ENCODE measurements at regions of chr11 and their contacts with region 1.

Region 1: DNA sequence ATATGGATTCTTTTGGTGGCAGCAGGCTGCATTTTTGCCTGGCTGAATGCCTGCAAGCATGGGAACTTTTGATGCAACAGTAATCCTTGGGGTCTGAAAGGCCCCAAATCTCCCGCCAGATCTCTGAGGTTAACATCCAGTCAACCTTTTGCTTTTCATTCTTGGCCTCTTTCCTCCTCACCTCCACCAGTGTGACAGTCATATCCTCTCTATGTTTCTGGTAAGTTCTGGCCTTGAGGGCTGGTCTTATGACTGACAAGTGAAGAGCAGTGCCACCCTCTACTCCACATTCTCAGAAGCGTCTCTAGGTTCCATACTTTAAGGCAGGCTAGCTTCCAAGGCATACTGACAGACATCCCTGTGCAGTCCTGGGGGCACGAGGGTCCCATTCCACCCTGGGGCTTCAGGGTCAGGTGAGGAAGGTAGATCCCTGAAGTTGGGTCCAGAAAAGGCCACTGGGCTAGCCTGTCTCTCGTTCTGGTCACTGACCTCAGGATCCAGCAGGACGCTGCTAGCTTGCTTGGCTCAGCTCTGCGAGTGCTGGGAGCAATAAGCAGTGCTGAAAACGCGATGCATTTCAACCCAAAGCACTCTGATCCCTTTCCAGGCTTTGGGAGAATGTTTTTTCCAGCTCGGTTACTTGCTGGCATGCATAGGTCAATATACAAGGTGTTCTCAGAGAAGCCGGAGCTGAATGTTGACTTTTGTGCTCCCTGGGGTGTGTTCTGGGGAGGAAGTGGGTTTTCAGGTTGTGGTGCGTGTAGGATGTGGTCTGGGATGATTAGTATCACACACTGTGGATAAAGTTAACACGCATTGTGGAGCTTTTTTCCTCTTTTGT is 75.2 kb downstream of the PTPRJ start:
- DNase-seq: peak; percentile 83
- H3K4me3 Mint-ChIP-seq: peak overlapping the region; percentile 23
- H3K27ac Mint-ChIP-seq: peak overlapping the region; percentile 91
- H3K4me1 Mint-ChIP-seq: peaks cover 80% of the 10 kb centered on the region
- H3K27me3 Mint-ChIP-seq: no peaks in the 10 kb centered on the region

Region 2: GRCh38 chr11:47932544-47932943 is 123.0 kb before region 1 on chr11:
- intact Hi-C with region 1: loop called (anchors 5 kb)
- DNase-seq: no peak
- H3K4me3 Mint-ChIP-seq: no peak overlapping the region
- H3K27ac Mint-ChIP-seq: no peak overlapping the region
- H3K4me1 Mint-ChIP-seq: peaks cover 20% of the 10 kb centered on the region
- H3K27me3 Mint-ChIP-seq: no peaks in the 10 kb centered on the region

Region 3: DNA sequence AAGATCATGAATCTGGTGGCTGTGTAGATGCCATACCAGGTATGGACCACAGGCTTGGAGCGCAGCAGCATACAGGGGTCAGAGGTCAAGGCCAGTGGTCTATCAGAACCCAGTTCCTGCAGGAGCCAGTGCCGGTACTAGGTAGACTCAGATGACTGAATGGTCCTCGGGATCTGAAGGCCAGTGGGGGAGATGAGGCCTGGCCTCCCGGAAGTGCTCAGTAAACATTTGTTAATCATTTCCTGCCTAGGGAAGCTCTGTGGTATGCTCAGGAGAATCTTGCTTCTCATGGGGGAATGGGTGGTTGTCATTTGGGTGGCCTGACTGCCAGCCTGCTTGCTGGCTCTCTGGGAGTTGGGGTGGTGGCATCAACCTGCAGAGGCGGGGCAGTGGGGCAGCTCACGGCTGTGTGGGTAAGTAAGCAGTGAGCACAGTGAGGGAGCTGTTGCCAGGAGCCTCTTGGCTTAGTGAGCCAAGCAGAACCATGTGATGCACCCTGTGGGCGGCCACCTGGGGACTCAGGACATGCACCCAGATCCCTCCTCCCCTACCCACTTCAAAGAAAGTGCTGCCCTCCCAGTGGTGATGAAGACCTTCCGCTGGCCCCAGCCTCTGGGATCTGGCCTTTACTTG is 42.1 kb before region 1 on chr11:
- intact Hi-C with region 1: loop called (anchors 2 kb)
- DNase-seq: no peak
- H3K4me3 Mint-ChIP-seq: peak overlapping the region; percentile 61
- H3K27ac Mint-ChIP-seq: peak overlapping the region; percentile 97
- H3K4me1 Mint-ChIP-seq: peaks cover 82% of the 10 kb centered on the region
- H3K27me3 Mint-ChIP-seq: no peaks in the 10 kb centered on the region

Region 4: DNA sequence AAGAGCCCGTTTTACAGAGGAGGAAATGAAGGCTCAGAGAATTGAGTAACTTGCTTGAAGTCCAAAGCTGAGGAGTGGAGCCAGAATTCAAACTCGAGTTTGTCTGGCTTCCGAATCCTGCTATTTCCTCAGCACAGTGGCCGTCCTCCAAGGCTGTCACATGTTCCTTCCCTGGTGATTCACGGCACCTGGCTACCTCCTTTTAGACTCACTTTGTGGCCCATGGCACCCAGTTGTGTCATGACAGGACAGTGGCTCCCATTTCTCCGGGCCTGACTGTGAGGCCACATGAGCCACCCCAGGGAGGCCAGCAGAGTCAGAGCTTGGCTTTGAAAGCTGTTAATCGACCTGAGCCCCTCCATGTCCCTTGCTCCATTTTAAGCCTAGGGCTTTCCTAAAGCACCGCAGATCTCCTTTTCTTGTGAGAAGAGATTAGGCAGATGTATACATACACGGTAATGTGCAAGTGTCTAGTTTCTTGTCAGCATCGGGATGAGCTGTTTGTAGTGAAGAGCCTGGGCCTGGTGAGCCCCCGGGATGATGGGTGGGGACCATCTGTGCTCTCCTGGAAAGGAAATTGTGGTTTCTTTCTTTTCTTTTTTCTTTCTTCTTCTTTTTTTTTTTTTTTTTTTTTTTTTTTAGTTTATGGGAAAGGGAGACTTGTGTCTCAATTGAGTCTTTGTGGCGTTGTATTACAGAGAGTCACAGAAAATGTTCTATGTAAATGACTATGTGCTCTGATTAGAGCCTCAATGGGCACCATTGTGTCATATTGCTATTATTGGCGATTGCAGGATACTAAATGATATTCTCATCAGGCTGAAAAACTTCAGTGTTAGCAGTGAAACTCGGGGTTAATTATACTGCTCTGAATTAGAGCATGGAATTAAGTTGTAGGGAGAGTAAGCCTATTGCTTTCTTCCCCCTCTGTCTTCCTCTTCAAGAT is 20.3 kb before region 1 on chr11:
- intact Hi-C with region 1: no loop called
- DNase-seq: no peak
- H3K4me3 Mint-ChIP-seq: peak overlapping the region; percentile 3
- H3K27ac Mint-ChIP-seq: peak overlapping the region; percentile 34
- H3K4me1 Mint-ChIP-seq: peaks cover 63% of the 10 kb centered on the region
- H3K27me3 Mint-ChIP-seq: no peaks in the 10 kb centered on the region

Region 5: DNA sequence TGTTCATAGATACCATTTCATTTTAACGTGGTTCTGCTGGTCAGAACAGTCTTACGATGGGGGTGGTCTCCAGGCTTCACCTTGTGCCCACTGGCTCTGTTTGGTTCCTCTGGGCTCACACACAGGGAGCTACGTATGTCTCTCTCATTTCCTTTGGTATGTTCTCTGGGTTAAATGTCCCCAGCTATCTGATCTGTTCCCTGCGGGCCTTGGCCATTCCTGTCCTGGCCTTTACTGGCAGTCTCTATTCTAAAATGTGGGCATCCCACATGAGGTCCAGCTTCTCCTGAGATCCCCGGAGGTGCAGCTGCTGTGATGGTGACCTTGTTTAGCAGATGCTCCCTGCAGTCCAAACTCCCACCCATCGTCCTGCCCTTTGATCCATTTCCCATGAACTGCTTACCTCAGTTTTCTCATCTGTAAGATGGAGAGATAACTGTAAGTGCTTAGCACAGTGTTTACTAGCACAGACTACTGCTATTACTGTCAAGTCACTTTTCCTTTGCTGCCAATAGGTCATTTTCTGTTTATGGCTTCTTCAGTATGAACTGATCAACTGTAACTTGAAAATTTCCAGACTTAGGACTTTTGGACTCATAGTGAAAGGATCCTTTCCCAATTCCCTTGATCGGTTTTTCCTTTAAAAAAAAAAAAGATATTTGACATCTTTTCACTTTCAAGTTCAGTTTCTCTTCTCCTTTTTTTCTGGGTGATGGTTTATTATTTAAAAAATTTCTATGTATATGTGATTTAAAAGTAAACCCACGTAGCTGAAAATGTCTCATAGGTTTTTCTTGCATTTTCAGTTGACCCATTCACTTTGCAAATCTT is 17.7 kb after region 1 on chr11:
- intact Hi-C with region 1: loop called (anchors 1 kb)
- DNase-seq: no peak
- H3K4me3 Mint-ChIP-seq: peak overlapping the region; percentile 49
- H3K27ac Mint-ChIP-seq: peak overlapping the region; percentile 79
- H3K4me1 Mint-ChIP-seq: peaks cover 36% of the 10 kb centered on the region
- H3K27me3 Mint-ChIP-seq: no peaks in the 10 kb centered on the region

Region 6: GRCh38 chr11:48097041-48097476 is 41.5 kb after region 1 on chr11:
- intact Hi-C with region 1: loop called (anchors 2 kb)
- DNase-seq: no peak
- H3K4me3 Mint-ChIP-seq: peak overlapping the region; percentile 4
- H3K27ac Mint-ChIP-seq: peak overlapping the region; percentile 74
- H3K4me1 Mint-ChIP-seq: peaks cover 61% of the 10 kb centered on the region
- H3K27me3 Mint-ChIP-seq: no peaks in the 10 kb centered on the region

Region 7: GRCh38 chr11:48154151-48154550 is 98.6 kb after region 1 on chr11:
- intact Hi-C with region 1: no loop called
- DNase-seq: no peak
- H3K4me3 Mint-ChIP-seq: no peak overlapping the region
- H3K27ac Mint-ChIP-seq: no peak overlapping the region
- H3K4me1 Mint-ChIP-seq: no peaks in the 10 kb centered on the region
- H3K27me3 Mint-ChIP-seq: no peaks in the 10 kb centered on the region

Region 8: DNA sequence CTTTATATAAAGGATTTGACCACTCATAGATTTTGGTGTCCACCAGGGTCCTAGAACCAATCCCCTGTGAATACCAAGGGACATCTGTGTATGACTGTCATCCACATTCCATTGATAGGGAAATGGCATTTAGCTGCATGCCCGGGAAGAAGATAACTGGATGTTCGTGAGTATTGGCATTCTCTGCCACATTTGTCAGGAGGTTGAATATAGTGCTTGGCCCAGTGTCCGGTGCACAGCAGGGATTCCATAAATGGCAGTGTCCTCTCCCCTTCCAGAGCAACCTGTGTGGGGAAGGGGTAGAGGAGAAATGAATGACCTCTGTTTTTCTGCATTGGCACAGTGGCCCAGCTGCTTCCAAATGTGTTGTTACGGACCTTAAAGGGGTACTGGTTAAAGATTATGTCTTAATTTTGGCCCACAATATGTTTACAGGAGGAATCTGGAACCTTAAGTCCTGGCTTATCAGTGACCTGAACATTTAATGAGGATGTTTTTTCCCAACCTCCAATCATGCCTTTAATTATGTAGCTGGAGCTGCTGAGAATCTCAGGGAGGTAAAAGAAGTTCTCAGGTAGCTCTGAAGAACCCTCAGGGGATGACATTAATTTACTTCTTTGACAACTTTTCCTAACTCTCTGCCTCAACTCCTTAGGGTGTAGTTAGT is 127.5 kb after region 1 on chr11:
- intact Hi-C with region 1: no loop called
- DNase-seq: no peak
- H3K4me3 Mint-ChIP-seq: no peak overlapping the region
- H3K27ac Mint-ChIP-seq: no peak overlapping the region
- H3K4me1 Mint-ChIP-seq: no peaks in the 10 kb centered on the region
- H3K27me3 Mint-ChIP-seq: peaks cover 2% of the 10 kb centered on the region